ENCODE measurements at regions of chr7 and their contacts with region 1.

Region 1: GRCh38 chr7:1709900-1710299 is 39.8 kb downstream of the ELFN1 start:
- DNase-seq: no peak
- H3K4me3 Mint-ChIP-seq: no peak overlapping the region
- H3K27ac Mint-ChIP-seq: no peak overlapping the region
- H3K4me1 Mint-ChIP-seq: no peaks in the 10 kb centered on the region
- H3K27me3 Mint-ChIP-seq: peaks cover 96% of the 10 kb centered on the region
- CTCF ChIP-seq: peak; percentile 71

Region 2: GRCh38 chr7:1368682-1369571 is 341.0 kb before region 1 on chr7:
- CTCF ChIA-PET with region 1: interaction called, 12 read pairs
- intact Hi-C with region 1: no loop called
- DNase-seq: no peak
- H3K4me3 Mint-ChIP-seq: no peak overlapping the region
- H3K27ac Mint-ChIP-seq: no peak overlapping the region
- H3K4me1 Mint-ChIP-seq: no peaks in the 10 kb centered on the region
- H3K27me3 Mint-ChIP-seq: peaks cover 99% of the 10 kb centered on the region
- CTCF ChIP-seq: peak; percentile 38

Region 3: DNA sequence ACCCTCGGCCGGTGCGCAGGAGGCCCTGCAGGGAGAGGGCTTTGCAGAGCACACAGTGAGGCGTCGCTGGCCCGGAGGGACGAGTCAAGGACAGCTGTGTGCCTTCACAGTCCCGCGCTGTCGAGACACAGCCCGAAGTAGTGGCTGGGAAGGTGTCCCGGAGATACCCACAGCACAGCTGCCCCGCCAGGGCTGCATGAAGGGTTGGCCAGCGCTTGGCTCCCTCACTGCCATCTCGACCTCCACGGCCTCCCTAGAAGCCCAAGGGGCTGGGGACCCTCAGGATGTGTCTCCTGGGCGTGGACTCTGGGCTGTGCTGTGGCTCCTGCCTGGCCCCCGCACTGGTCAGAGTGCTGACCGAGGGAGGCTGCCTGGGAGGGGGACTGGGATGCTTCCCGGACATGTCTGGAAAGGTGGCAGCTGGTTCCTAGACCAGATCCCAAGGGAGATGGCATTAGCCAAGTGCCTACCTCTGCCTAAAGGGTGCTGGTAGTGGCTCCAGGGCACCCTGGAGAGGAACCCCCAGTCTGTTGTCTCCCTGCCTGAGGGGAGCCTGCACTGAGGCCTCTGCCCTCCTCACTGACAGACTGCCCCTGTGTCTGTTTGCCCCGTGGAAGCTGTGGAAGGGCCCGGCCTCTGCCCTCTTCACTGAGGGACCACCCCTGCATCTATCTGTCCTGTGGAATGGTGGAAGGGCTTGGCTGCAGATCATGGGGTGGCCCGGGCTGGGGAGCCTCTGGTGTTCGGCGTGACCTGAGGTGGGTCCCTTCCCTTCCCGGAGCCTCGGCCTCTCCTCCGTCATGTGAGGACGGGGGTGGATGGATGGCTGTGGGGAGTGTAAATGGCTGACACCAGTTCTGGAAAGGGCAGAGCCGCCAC is 34.0 kb before region 1 on chr7:
- CTCF ChIA-PET with region 1: no interaction called
- intact Hi-C with region 1: no loop called
- DNase-seq: no peak
- H3K4me3 Mint-ChIP-seq: no peak overlapping the region
- H3K27ac Mint-ChIP-seq: no peak overlapping the region
- H3K4me1 Mint-ChIP-seq: no peaks in the 10 kb centered on the region
- H3K27me3 Mint-ChIP-seq: peaks cover 98% of the 10 kb centered on the region
- CTCF ChIP-seq: no peak

Region 4: DNA sequence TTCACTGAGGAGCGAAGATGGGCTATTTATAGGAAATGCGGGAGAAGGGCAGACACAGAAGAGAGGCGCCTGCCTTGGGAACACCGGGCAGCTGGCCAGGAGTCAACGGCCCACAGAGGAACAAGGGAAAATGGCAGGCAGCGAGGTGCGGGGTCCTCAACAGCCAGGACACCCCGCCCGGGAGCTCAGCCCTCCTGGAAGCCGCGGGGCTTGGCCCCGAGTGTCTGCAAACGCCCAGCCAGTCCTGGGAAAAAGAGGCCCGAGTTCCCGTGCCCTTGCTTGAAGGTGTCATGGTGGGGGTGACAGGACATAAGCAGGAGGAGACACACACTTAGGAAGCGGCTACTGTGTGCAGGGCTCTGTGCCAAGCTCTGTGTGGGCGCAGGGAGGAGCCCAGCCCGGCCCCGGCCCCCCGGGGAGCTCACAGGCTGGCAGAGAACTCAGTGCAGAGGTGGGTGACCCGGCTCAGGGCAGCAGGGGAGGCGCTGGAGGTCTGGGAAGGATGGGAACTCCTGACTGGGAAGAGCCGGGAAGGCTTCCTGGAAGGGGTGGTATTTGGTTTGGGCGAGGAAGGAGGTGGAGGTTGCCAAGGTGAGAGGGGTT is 40.1 kb after region 1 on chr7:
- CTCF ChIA-PET with region 1: no interaction called
- intact Hi-C with region 1: no loop called
- DNase-seq: no peak
- H3K4me3 Mint-ChIP-seq: no peak overlapping the region
- H3K27ac Mint-ChIP-seq: no peak overlapping the region
- H3K4me1 Mint-ChIP-seq: peaks cover 43% of the 10 kb centered on the region
- H3K27me3 Mint-ChIP-seq: peaks cover 84% of the 10 kb centered on the region
- CTCF ChIP-seq: no peak

Measured in Calu3 (cell line).